ENCODE measurements at regions of chr4 and their contacts with region 1.

Region 1: GRCh38 chr4:2212831-2213230 is 29.1 kb downstream of the HAUS3 start:
- DNase-seq: no peak
- H3K4me3 Mint-ChIP-seq: no peak overlapping the region
- H3K27ac Mint-ChIP-seq: no peak overlapping the region
- H3K4me1 Mint-ChIP-seq: no peaks in the 10 kb centered on the region
- H3K27me3 Mint-ChIP-seq: no peaks in the 10 kb centered on the region

Region 2: DNA sequence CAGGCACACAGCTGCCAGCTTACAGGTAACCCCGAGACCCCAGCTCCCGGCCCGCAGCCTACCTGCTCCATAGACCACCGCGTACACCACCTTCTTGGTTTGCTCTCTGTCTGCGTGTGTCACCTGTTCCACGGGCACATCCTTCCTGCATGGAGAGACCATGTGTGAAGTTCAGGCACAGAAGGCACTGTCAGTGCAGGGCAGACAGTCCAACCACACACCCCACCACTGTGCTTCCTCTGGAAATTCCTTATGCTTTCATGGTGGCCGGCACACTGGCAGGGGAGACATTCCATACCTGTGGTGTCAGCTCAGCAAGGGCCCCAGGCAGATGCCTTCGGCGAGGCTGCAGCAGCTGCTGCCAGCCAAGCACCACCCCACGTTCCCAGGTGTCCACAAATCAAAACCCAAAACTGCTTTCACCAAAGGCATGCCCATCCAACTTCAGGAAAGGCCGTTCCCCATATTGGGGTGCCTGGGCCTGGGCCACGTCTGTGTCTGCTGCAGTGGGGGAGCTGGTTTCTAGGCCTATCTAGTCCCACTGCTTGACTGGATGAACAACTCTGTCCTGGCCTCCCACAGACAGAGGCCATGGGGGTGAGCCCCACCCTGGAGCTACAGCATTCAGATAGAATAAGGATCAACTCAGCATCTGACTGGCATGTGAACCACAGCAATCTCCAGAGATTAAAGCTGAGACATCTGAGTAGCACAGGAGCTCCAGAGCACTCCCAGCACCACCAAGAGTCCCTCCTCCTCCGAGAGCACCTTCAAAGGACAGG is 116.9 kb before region 1 on chr4:
- CTCF ChIA-PET with region 1: no interaction called
- POLR2A ChIA-PET with region 1: no interaction called
- intact Hi-C with region 1: loop called (anchors 10 kb)
- DNase-seq: no peak
- H3K4me3 Mint-ChIP-seq: no peak overlapping the region
- H3K27ac Mint-ChIP-seq: no peak overlapping the region
- H3K4me1 Mint-ChIP-seq: no peaks in the 10 kb centered on the region
- H3K27me3 Mint-ChIP-seq: no peaks in the 10 kb centered on the region